ENCODE measurements at regions of chr19 and their contacts with region 1.

Region 1: DNA sequence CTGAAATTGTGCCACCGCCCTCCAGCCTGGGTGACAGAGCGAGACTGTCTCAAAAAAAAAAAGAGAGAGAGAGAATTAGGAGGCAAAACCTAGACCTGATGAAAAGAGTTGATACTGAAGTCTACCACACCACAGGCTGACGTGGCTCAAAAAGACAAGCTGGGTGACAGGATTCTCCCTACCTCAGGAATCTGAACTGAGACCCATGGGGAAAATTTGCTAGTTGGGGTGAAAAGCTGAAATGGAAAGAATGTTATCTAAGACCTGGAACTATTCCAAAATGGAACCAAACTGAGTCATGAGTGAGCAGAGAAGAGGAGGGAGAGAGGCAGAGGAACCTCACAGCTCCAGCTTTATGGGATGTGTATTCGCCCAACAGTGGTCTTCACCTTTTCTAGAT is 11.7 kb downstream of the SMG9 start:
- DNase-seq: no peak
- H3K4me3 ChIP-seq: no peak overlapping the region
- H3K4me3 Mint-ChIP-seq: no peak overlapping the region
- H3K27ac ChIP-seq: no peak overlapping the region
- H3K27ac Mint-ChIP-seq: peak overlapping the region in 2 of 7 donors; percentile 16 to 23
- H3K4me1 ChIP-seq: peaks cover 6% of the 10 kb centered on the region
- H3K4me1 Mint-ChIP-seq: peaks cover 11 to 21% (median 14%) of the 10 kb centered on the region in 4 donors
- H3K27me3 ChIP-seq: no peaks in the 10 kb centered on the region
- H3K27me3 Mint-ChIP-seq: no peaks in the 10 kb centered on the region

Region 2: DNA sequence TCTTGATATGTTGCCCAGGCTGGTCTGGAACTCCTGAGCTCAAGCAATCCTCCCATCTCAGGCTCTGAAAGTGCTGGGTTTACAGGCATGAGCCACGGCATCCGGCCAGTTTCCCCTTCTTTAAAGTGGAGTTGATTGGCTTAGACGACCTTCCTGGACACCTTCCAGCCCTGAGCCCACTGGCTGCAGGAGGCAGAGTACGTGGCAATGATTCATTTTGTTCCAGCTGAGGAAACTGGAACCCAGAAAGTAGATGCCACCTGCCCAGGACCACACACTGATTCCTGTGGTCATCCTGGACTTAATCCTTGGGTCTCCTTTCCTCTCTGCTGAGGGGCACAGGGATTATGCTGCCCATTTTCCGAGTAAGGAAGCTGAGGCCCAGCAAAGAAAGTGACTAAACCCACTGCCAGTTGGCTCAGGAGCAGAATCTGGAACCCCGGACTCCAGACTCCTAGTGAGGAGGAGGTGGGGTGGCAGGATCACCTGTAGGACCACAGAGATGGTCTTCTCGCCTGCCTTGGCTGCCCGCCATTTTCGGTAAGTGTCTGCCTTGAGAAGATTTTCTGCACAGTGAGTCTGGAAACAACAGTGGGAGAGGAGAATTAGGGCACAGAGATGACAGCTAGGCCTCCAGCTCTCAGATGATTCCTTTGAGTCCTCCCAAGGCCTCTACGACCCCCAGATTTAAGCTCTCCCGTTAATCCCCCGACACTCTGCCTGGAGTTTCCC is 168.4 kb before region 1 on chr19:
- CTCF ChIA-PET with region 1: no interaction called
- POLR2A ChIA-PET with region 1: no interaction called
- intact Hi-C with region 1: no loop called
- DNase-seq: peak in 1 of 5 donors; percentile 6
- H3K4me3 ChIP-seq: peak overlapping the region; percentile 79 to 100
- H3K4me3 Mint-ChIP-seq: peak overlapping the region; percentile 93 to 99 (median 96)
- H3K27ac ChIP-seq: peak overlapping the region; percentile 99
- H3K27ac Mint-ChIP-seq: peak overlapping the region; percentile 98 to 99 (median 99)
- H3K4me1 ChIP-seq: peaks cover 23% of the 10 kb centered on the region
- H3K4me1 Mint-ChIP-seq: peaks cover 19 to 74% (median 40%) of the 10 kb centered on the region in 4 donors
- H3K27me3 ChIP-seq: no peaks in the 10 kb centered on the region
- H3K27me3 Mint-ChIP-seq: peaks cover 0 to 2% of the 10 kb centered on the region in 2 donors

Region 3: DNA sequence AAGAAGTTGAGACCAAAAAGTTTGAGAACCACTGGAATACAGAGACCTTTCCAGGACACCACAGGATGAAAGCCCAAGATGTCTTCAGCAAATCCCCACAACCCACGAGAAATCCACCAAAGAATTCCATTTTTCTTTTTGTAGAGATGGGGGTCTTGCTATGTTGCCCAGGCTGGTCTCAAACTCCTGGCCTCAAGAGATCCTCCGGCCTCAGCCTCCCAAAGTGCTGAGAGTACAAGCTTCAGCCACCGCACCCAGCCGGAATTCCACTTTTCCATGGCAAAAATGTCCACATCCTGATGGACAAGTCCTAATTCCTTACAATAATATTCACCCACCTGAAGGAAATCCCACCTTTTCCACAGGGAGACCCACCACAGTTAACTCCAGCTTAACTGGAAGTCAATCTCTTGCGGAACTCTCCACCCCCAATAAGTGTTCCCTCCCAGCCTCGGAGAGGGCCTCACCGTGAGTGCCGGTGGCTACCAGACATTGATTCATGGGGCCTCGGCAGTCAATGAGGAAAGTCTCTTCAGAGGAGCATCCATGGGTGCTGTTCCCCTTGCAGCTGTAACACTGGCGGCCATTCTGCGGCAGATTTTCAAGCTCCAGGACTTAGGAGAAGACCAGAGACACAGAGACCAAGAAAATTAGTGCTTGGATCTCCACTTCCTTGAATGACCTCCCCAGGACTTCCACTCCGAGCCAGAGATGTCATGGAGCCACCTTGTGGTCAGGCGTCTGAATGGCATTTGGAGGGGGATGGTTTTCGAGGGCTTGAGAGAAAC is 91.1 kb before region 1 on chr19:
- CTCF ChIA-PET with region 1: no interaction called
- POLR2A ChIA-PET with region 1: no interaction called
- intact Hi-C with region 1: no loop called
- DNase-seq: peak in 2 of 5 donors; percentile 16 to 17
- H3K4me3 ChIP-seq: no peak overlapping the region
- H3K4me3 Mint-ChIP-seq: no peak overlapping the region
- H3K27ac ChIP-seq: no peak overlapping the region
- H3K27ac Mint-ChIP-seq: peak overlapping the region in 1 of 7 donors; percentile 32
- H3K4me1 ChIP-seq: no peaks in the 10 kb centered on the region
- H3K4me1 Mint-ChIP-seq: no peaks in the 10 kb centered on the region
- H3K27me3 ChIP-seq: no peaks in the 10 kb centered on the region
- H3K27me3 Mint-ChIP-seq: no peaks in the 10 kb centered on the region

Region 4: GRCh38 chr19:43715776-43716175 is 27.2 kb before region 1 on chr19 and contains the start of gene IRGC:
- CTCF ChIA-PET with region 1: no interaction called
- POLR2A ChIA-PET with region 1: no interaction called
- intact Hi-C with region 1: no loop called
- DNase-seq: no peak
- H3K4me3 ChIP-seq: no peak within 1 kb of the TSS
- H3K4me3 Mint-ChIP-seq: no peak within 1 kb of the TSS
- H3K27ac ChIP-seq: no peak within 1 kb of the TSS
- H3K27ac Mint-ChIP-seq: no peak within 1 kb of the TSS
- H3K4me1 ChIP-seq: no peaks in the 10 kb centered on the region
- H3K4me1 Mint-ChIP-seq: no peaks in the 10 kb centered on the region
- H3K27me3 ChIP-seq: no peaks in the 10 kb centered on the region
- H3K27me3 Mint-ChIP-seq: peaks cover 8 to 14% of the 10 kb centered on the region in 2 donors
- total RNA-seq, gene IRGC: not detected

Region 5: GRCh38 chr19:43731846-43732245 is 11.2 kb before region 1 on chr19:
- CTCF ChIA-PET with region 1: interaction called, 12 read pairs
- POLR2A ChIA-PET with region 1: no interaction called
- intact Hi-C with region 1: no loop called
- DNase-seq: no peak
- H3K4me3 ChIP-seq: no peak overlapping the region
- H3K4me3 Mint-ChIP-seq: no peak overlapping the region
- H3K27ac ChIP-seq: no peak overlapping the region
- H3K27ac Mint-ChIP-seq: peak overlapping the region in 2 of 7 donors; percentile 37 to 42
- H3K4me1 ChIP-seq: no peaks in the 10 kb centered on the region
- H3K4me1 Mint-ChIP-seq: peaks cover 0 to 3% (median 0%) of the 10 kb centered on the region in 4 donors
- H3K27me3 ChIP-seq: no peaks in the 10 kb centered on the region
- H3K27me3 Mint-ChIP-seq: no peaks in the 10 kb centered on the region

Region 6: DNA sequence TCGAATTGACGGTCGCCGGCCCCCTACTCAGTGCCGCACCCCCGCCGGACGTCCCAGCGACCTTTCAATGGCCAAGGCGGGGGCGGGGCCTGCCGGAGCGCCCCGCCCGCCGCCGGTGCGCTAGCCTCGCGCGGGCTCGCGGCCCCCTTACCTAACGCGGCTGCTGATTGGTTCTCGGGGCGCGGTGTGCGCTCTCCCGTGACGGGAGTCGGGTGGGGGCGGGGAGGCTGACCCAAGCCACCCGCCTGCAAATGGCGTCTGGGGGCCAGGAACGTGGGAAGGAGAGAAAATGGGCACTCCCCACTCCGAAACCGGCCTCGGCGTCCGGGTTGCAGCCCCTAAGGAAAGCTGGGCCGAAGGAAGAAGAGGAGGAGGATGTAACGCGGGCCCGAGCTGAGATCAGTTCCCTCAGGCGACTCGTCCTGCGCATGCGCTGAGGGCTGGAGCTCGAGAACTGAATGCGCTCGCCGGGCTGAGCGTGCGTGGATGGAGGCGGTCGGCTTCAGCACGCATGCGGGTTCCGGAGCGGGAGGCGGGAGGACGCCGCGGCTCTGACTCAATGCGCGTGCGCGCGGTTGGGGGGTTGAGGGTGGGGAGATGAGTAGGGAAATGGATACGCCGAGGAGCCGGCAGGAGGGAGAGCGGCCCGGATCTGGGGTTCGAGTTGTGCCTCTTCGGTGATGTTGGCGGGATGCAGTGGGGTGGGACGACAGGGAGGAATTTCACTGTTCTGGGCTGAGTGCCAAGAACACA is 11.7 kb after region 1 on chr19 and contains the start of gene SMG9:
- CTCF ChIA-PET with region 1: interaction called, 18 read pairs
- POLR2A ChIA-PET with region 1: interaction called, 9 read pairs
- intact Hi-C with region 1: loop called (anchors 1 kb)
- DNase-seq: peak; percentile 98 to 100 (median 99)
- H3K4me3 ChIP-seq: peak within 1 kb of the TSS; percentile 94 to 98
- H3K4me3 Mint-ChIP-seq: peak within 1 kb of the TSS; percentile 90 to 97 (median 96)
- H3K27ac ChIP-seq: peak within 1 kb of the TSS; percentile 93
- H3K27ac Mint-ChIP-seq: peak within 1 kb of the TSS; percentile 96 to 99 (median 99)
- H3K4me1 ChIP-seq: peaks cover 38% of the 10 kb centered on the region
- H3K4me1 Mint-ChIP-seq: peaks cover 22 to 63% (median 41%) of the 10 kb centered on the region in 4 donors
- H3K27me3 ChIP-seq: no peaks in the 10 kb centered on the region
- H3K27me3 Mint-ChIP-seq: no peaks in the 10 kb centered on the region
- total RNA-seq, gene SMG9: 57.6 to 57.9 TPM

Region 7: DNA sequence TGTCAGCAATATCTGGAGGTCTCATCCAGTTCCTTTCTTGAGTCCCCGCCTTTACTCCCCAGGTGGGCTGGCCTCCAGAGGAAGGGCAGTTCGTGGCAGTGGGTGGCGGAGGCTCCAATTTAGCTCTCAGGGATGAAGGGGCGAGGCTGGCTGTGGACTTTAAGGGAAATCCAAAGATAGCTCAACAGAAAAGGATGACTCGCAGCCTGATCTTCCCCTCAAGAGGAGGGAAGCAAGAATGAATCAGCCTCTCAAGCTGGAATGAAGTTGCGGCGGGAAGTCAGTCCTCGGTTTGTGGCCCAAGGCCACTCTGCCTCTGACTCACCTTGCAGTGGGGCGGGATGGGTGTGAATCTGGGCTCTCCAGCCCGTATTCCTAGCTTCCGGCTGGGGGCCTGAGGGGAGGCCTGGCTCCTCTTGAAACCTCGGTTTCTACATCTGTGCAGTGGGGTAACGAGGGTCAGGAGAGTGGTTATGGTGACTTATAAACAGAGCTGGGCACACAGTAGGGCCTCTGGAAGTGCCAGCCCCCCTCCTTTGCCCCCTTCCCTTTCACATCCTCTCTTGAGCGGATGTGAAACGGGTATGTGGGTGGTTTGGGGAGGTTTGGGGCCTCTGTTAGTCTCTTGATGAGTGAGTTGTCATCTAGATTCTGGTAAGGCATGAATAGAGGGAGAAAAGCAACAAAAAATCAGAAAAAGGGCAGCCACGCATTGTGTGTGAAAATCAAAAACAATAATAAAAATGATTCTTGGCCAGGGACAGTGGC is 22.3 kb after region 1 on chr19:
- CTCF ChIA-PET with region 1: interaction called, 26 read pairs
- POLR2A ChIA-PET with region 1: interaction called, 5 read pairs
- intact Hi-C with region 1: no loop called
- DNase-seq: peak; percentile 59 to 91 (median 63)
- H3K4me3 ChIP-seq: peak overlapping the region in 1 of 2 donors; percentile 25
- H3K4me3 Mint-ChIP-seq: peak overlapping the region; percentile 34 to 75 (median 66)
- H3K27ac ChIP-seq: peak overlapping the region; percentile 50
- H3K27ac Mint-ChIP-seq: peak overlapping the region; percentile 83 to 94 (median 90)
- H3K4me1 ChIP-seq: peaks cover 40% of the 10 kb centered on the region
- H3K4me1 Mint-ChIP-seq: peaks cover 26 to 49% (median 39%) of the 10 kb centered on the region in 4 donors
- H3K27me3 ChIP-seq: no peaks in the 10 kb centered on the region
- H3K27me3 Mint-ChIP-seq: no peaks in the 10 kb centered on the region

Region 8: DNA sequence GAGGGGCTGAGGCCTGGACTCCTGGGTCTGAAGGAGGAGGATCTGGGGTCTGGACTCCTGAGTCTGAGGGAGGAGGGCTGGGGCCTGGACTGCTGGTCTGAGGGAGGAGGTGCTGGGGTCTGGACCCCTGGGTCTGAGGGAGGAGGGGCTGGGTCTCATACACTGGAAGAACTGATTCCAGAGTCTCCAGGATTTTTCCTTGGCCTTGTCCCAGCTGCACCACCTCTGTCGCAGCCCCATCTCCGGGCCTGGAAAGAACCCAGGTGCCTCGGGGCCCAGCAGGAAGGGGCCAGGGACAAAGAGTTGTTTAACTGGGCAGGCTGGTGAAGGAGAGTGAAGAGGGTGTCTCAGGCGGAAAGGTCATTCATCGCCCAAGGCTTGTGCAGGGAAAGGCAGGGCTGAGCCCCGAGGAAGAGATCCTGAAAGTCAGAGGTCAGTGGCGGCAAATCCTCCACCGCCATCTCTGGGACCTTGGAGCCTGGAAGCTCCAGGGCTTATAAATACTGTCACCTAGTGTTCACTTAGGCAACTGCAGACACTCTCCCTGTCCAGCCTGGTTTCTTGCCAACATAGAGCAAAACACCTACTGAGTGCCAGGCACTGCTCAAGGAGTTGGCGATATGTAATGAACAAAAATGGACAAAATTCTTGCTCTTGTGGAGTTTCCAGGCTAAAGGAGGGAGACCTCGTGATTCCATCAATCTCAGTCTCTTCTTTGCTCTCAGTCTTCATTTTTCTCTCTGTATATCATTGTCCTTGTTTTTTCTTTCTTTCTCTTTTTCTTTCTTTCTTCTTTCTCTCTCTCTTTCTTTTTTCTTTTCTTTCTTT is 42.2 kb after region 1 on chr19:
- CTCF ChIA-PET with region 1: interaction called, 65 read pairs
- POLR2A ChIA-PET with region 1: interaction called, 22 read pairs
- intact Hi-C with region 1: loop called (anchors 1 kb)
- DNase-seq: peak; percentile 59 to 72 (median 62)
- H3K4me3 ChIP-seq: no peak overlapping the region
- H3K4me3 Mint-ChIP-seq: peak overlapping the region in 7 of 8 donors; percentile 73 to 84 (median 79)
- H3K27ac ChIP-seq: peak overlapping the region; percentile 46
- H3K27ac Mint-ChIP-seq: peak overlapping the region; percentile 77 to 96 (median 93)
- H3K4me1 ChIP-seq: peaks cover 47% of the 10 kb centered on the region
- H3K4me1 Mint-ChIP-seq: peaks cover 30 to 52% (median 37%) of the 10 kb centered on the region in 4 donors
- H3K27me3 ChIP-seq: no peaks in the 10 kb centered on the region
- H3K27me3 Mint-ChIP-seq: peaks cover 0 to 2% of the 10 kb centered on the region in 2 donors

Region 9: GRCh38 chr19:43798026-43798545 is 55.1 kb after region 1 on chr19:
- CTCF ChIA-PET with region 1: interaction called, 10 read pairs
- POLR2A ChIA-PET with region 1: no interaction called
- intact Hi-C with region 1: no loop called
- DNase-seq: no peak
- H3K4me3 ChIP-seq: peak overlapping the region; percentile 44 to 60
- H3K4me3 Mint-ChIP-seq: peak overlapping the region; percentile 70 to 85 (median 78)
- H3K27ac ChIP-seq: peak overlapping the region; percentile 13
- H3K27ac Mint-ChIP-seq: peak overlapping the region in 2 of 7 donors; percentile 68 to 79
- H3K4me1 ChIP-seq: peaks cover 9% of the 10 kb centered on the region
- H3K4me1 Mint-ChIP-seq: peaks cover 4 to 18% (median 8%) of the 10 kb centered on the region in 4 donors
- H3K27me3 ChIP-seq: no peaks in the 10 kb centered on the region
- H3K27me3 Mint-ChIP-seq: no peaks in the 10 kb centered on the region

Region 10: DNA sequence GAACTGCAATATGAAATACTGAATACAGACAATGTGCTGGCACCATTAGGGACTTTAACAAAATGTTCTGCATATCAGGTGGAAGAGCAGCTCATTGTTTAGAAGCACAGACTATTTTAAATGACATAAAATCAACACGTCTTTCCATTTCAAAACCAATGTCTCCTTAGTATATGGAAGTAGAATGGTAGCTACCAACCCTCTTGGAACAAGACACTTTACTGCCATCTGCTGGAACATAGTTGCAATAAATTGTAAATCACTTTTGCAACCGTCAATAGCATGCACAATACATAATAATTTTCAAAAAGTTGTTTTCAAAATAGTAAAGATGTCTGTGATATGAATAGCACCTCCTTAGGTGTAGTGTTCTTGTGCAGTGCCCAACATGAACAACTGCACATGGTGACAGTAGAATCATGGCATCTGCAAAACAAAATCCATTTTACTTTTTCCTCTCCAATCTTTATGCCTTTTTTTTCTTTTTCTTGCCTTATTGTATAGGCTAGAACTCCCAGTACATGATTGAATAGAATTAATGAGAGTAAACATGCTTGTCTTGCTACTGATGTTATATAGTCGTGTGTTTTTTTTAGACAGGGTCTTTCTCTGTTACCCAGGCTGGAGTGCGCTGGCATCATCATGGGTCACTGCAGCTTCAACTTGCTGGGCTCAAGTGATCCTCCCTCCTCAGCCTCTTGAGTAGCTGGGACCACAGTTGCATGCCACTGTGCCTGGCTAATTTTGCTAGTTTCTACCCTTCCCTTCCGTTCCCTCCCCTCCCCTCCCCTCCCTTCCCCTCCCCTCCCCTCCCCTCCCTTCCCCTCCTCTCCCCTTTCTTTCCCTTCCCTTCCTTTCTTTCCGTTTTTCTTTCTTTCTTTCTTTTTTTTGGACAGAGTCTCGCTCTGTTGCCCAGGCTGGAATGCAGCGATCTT is 67.0 kb after region 1 on chr19:
- CTCF ChIA-PET with region 1: interaction called, 51 read pairs
- POLR2A ChIA-PET with region 1: interaction called, 5 read pairs
- intact Hi-C with region 1: loop called (anchors 1 kb)
- DNase-seq: peak in 4 of 5 donors; percentile 49 to 58 (median 55)
- H3K4me3 ChIP-seq: no peak overlapping the region
- H3K4me3 Mint-ChIP-seq: no peak overlapping the region
- H3K27ac ChIP-seq: no peak overlapping the region
- H3K27ac Mint-ChIP-seq: no peak overlapping the region
- H3K4me1 ChIP-seq: peaks cover 14% of the 10 kb centered on the region
- H3K4me1 Mint-ChIP-seq: peaks cover 0 to 13% (median 3%) of the 10 kb centered on the region in 4 donors
- H3K27me3 ChIP-seq: no peaks in the 10 kb centered on the region
- H3K27me3 Mint-ChIP-seq: peaks cover 1 to 11% of the 10 kb centered on the region in 2 donors

Region 11: DNA sequence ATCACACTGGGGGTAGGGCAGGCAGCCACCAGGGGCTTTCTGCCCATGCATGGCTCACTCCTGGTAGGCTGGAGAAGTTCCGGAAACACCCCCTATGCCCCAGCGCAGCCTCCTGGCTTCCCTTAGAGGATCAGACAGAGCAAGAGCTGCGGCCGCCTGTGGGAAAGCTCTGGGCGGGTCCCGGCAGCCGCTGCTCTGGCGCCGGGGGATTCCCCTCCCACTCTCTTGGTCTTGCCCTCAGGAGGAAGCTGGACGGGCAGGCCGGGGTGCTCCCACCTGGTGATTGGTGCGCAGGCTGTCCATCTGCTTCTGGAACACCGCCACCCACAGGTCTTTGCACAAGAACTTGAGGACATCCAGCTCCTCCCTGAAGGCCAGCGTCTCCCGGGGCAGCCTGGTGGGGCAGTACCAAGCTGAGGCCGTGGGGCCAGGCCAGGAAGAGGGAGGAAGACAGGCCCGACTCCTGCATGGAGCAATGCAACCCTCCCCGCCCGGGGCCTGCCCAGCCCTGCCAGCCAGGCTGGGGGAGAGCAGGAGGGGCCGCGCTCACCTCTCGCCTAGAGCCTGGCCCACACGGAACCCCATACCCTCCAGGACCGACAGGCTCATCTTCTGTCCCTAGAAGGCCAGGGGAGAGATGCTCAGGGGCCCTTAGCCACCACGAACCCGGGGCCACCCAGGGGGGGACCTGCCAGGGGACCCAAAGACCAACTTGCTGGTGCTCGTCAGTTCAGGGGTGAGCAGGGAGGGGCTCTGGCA is 1421.7 kb after region 1 on chr19:
- CTCF ChIA-PET with region 1: no interaction called
- POLR2A ChIA-PET with region 1: no interaction called
- intact Hi-C with region 1: no loop called
- DNase-seq: peak; percentile 46 to 80 (median 49)
- H3K4me3 ChIP-seq: no peak overlapping the region
- H3K4me3 Mint-ChIP-seq: peak overlapping the region in 3 of 8 donors; percentile 17 to 61 (median 21)
- H3K27ac ChIP-seq: peak overlapping the region; percentile 51
- H3K27ac Mint-ChIP-seq: peak overlapping the region; percentile 15 to 90 (median 59)
- H3K4me1 ChIP-seq: peaks cover 36% of the 10 kb centered on the region
- H3K4me1 Mint-ChIP-seq: peaks cover 16 to 46% (median 34%) of the 10 kb centered on the region in 4 donors
- H3K27me3 ChIP-seq: no peaks in the 10 kb centered on the region
- H3K27me3 Mint-ChIP-seq: no peaks in the 10 kb centered on the region

Measured in CD4-positive, alpha-beta memory T cell (primary cell).